Activated B cell treated with CpG ODN at 0.5 μM for 24 hours (primary cell): ENCODE measurements at regions of chr10 and their contacts with region 1.

Region 1: GRCh38 chr10:60237977-60238758 is 151.5 kb downstream of the ANK3 start:
- DNase-seq: peak; percentile 23
- ATAC-seq: peak; percentile 51
- H3K4me3 Mint-ChIP-seq: peak overlapping the region; percentile 67
- H3K27ac Mint-ChIP-seq: peak overlapping the region; percentile 93
- H3K4me1 Mint-ChIP-seq: peaks cover 61% of the 10 kb centered on the region
- H3K27me3 Mint-ChIP-seq: no peaks in the 10 kb centered on the region
- CTCF ChIP-seq: no peak

Region 2: GRCh38 chr10:60099998-60100747 is 138.0 kb before region 1 on chr10:
- CTCF ChIA-PET with region 1: interaction called, 10 read pairs
- POLR2A ChIA-PET with region 1: no interaction called
- intact Hi-C with region 1: loop called (anchors 1 kb)
- DNase-seq: no peak
- ATAC-seq: no peak
- H3K4me3 Mint-ChIP-seq: no peak overlapping the region
- H3K27ac Mint-ChIP-seq: no peak overlapping the region
- H3K4me1 Mint-ChIP-seq: no peaks in the 10 kb centered on the region
- H3K27me3 Mint-ChIP-seq: no peaks in the 10 kb centered on the region
- CTCF ChIP-seq: peak; percentile 70

Region 3: GRCh38 chr10:60271319-60272040 is 33.3 kb after region 1 on chr10:
- CTCF ChIA-PET with region 1: interaction called, 7 read pairs
- POLR2A ChIA-PET with region 1: interaction called, 7 read pairs
- intact Hi-C with region 1: loop called (anchors 2 kb)
- DNase-seq: no peak
- ATAC-seq: peak; percentile 81
- H3K4me3 Mint-ChIP-seq: no peak overlapping the region
- H3K27ac Mint-ChIP-seq: peak overlapping the region; percentile 46
- H3K4me1 Mint-ChIP-seq: peaks cover 13% of the 10 kb centered on the region
- H3K27me3 Mint-ChIP-seq: no peaks in the 10 kb centered on the region
- CTCF ChIP-seq: no peak

Region 4: GRCh38 chr10:60358282-60358681 is 120.1 kb after region 1 on chr10:
- CTCF ChIA-PET with region 1: interaction called, 3 read pairs
- POLR2A ChIA-PET with region 1: interaction called, 4 read pairs
- intact Hi-C with region 1: loop called (anchors 2 kb)
- DNase-seq: no peak
- ATAC-seq: peak; percentile 90
- H3K4me3 Mint-ChIP-seq: no peak overlapping the region
- H3K27ac Mint-ChIP-seq: no peak overlapping the region
- H3K4me1 Mint-ChIP-seq: peaks cover 9% of the 10 kb centered on the region
- H3K27me3 Mint-ChIP-seq: no peaks in the 10 kb centered on the region
- CTCF ChIP-seq: no peak

Region 5: GRCh38 chr10:60652628-60653027 is 414.5 kb after region 1 on chr10:
- CTCF ChIA-PET with region 1: interaction called, 9 read pairs
- POLR2A ChIA-PET with region 1: interaction called, 3 read pairs
- intact Hi-C with region 1: loop called (anchors 1 kb)
- DNase-seq: no peak
- ATAC-seq: peak; percentile 100
- H3K4me3 Mint-ChIP-seq: peak overlapping the region; percentile 28
- H3K27ac Mint-ChIP-seq: peak overlapping the region; percentile 64
- H3K4me1 Mint-ChIP-seq: peaks cover 14% of the 10 kb centered on the region
- H3K27me3 Mint-ChIP-seq: no peaks in the 10 kb centered on the region
- CTCF ChIP-seq: no peak

Region 6: GRCh38 chr10:61135276-61135721 is 897.1 kb after region 1 on chr10:
- CTCF ChIA-PET with region 1: no interaction called
- POLR2A ChIA-PET with region 1: no interaction called
- intact Hi-C with region 1: loop called (anchors 5 kb)
- DNase-seq: peak; percentile 19
- ATAC-seq: peak; percentile 94
- H3K4me3 Mint-ChIP-seq: peak overlapping the region; percentile 68
- H3K27ac Mint-ChIP-seq: peak overlapping the region; percentile 91
- H3K4me1 Mint-ChIP-seq: peaks cover 43% of the 10 kb centered on the region
- H3K27me3 Mint-ChIP-seq: no peaks in the 10 kb centered on the region
- CTCF ChIP-seq: no peak